ENCODE measurements at regions of chr1 and their contacts with region 1.

Region 1: GRCh38 chr1:48790397-48790796 is 13.7 kb upstream of the BEND5 start:
- DNase-seq: no peak
- H3K4me3 Mint-ChIP-seq: no peak overlapping the region
- H3K27ac Mint-ChIP-seq: no peak overlapping the region
- H3K4me1 Mint-ChIP-seq: peaks cover 44% of the 10 kb centered on the region
- H3K27me3 Mint-ChIP-seq: peaks cover 1% of the 10 kb centered on the region

Region 2: GRCh38 chr1:48776393-48777218 is 13.8 kb before region 1 on chr1 and contains the start of gene BEND5:
- intact Hi-C with region 1: loop called (anchors 2 kb)
- DNase-seq: peak; percentile 33
- H3K4me3 Mint-ChIP-seq: peak within 1 kb of the TSS; percentile 89
- H3K27ac Mint-ChIP-seq: peak within 1 kb of the TSS; percentile 74
- H3K4me1 Mint-ChIP-seq: peaks cover 45% of the 10 kb centered on the region
- H3K27me3 Mint-ChIP-seq: peaks cover 10% of the 10 kb centered on the region
- total RNA-seq, gene BEND5: 3.0 and 4.2 TPM in 2 replicates

Region 3: DNA sequence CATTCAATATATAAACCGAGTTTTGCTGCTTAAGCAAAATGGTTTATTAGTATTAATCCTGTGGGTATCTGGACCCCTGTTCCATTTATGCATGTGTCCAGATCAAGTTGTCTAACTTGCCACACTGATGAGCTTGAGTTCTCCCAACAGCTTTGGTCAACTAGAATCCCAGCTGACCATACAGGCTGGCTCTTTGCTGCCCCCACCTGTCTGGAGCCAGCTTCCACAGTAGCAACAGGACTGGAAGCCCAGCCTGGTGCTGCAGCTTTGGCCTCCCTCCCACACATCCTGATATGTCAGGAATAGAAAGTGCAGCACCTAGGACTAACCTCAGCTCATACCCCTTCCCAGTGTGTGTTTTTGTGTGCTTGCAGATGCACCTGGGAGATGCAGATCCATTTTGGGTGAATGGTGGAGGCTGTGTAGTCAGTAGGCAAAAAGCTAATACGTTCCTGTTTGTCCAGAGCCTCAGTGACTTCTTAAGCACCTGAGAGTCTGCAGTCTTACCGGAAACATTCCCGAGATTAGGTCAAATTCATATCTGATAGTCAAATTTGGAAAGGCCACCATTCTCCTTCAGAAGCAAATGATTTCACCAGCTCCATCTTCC is 27.2 kb after region 1 on chr1:
- intact Hi-C with region 1: no loop called
- DNase-seq: no peak
- H3K4me3 Mint-ChIP-seq: no peak overlapping the region
- H3K27ac Mint-ChIP-seq: no peak overlapping the region
- H3K4me1 Mint-ChIP-seq: no peaks in the 10 kb centered on the region
- H3K27me3 Mint-ChIP-seq: peaks cover 17% of the 10 kb centered on the region